Vagina (tissue), 2 donors: ENCODE measurements at regions of chr1 and their contacts with region 1.

Region 1: GRCh38 chr1:200669314-200670241 is at the start of gene DDX59:
- DNase-seq: peak in 1 of 2 donors; percentile 98
- H3K4me3 ChIP-seq: peak within 1 kb of the TSS; percentile 76 to 92
- H3K27ac ChIP-seq: peak within 1 kb of the TSS; percentile 98
- H3K4me1 ChIP-seq: peaks cover 34% of the 10 kb centered on the region
- H3K27me3 ChIP-seq: no peaks in the 10 kb centered on the region
- CTCF ChIP-seq: peak in 1 of 3 experiments; percentile 29
- POLR2A ChIP-seq: peak in 1 of 2 donors; percentile 80
- total RNA-seq, gene DDX59: 16.2 TPM

Region 2: DNA sequence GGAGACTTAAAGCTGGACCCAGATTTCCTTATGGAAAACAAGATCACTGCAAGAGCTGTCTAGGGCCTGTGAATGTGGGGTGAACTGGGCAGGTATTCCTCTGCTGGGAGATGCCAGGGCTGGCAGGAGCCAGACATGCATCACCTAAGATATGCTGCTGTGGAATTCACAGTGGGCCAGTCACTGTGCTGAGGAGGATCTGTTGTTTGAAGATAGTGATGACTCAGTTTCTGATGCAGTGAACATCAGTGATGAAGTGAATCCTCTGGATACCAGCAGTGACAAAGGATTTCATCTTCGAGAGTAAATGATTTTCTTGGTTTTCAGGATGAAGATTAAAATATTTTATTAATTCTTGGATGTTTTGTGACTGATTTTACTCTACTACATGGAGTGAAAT is 39.2 kb after region 1 on chr1:
- intact Hi-C with region 1: no loop called
- DNase-seq: no peak
- H3K4me3 ChIP-seq: no peak overlapping the region
- H3K27ac ChIP-seq: no peak overlapping the region
- H3K4me1 ChIP-seq: no peaks in the 10 kb centered on the region
- H3K27me3 ChIP-seq: no peaks in the 10 kb centered on the region
- CTCF ChIP-seq: no peak
- POLR2A ChIP-seq: no peak

Region 3: DNA sequence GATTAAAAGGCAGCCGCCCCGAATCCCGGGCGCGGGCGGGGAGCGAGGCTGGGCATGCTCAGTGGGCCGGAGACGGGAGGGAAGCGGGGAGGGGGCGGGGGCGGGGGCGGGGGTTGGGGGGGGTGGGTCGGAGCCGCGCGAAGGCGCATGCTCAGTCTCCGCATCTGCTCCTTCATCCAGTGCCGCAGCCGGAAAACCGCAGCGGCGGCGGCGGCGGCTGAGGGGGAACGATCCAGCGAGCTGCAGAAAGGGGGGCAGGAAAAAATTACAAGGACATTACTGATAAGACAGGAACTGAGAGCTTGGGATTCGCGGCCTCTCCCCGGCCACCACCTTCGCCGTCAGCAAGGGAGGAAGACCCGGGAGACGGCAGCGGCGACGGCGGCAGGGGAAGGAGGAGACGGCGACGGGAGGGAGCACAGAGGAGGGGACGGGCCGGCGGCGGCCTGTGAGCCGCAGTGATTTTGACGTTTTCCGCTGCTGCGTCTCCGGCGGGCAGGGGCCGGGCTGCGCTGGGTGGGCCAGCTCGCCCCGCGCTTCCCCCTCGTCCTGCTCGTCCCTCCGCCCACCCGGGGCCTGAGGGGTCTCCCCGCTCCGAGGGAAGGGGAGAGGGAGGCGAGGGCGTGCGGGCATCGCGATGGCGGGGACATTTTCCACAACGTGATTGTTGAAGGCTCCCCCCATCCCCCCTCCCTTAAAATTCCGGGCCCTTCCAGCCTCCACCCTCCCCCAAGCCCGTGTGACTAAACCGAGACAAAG is 69.3 kb after region 1 on chr1 and contains the start of gene CAMSAP2:
- intact Hi-C with region 1: loop called (anchors 2 kb)
- DNase-seq: peak in 1 of 2 donors; percentile 97
- H3K4me3 ChIP-seq: peak within 1 kb of the TSS; percentile 57 to 92
- H3K27ac ChIP-seq: peak within 1 kb of the TSS; percentile 98
- H3K4me1 ChIP-seq: peaks cover 41% of the 10 kb centered on the region
- H3K27me3 ChIP-seq: no peaks in the 10 kb centered on the region
- CTCF ChIP-seq: no peak
- POLR2A ChIP-seq: peak in 1 of 2 donors; percentile 96
- total RNA-seq, gene CAMSAP2: 30.0 TPM

Region 4: GRCh38 chr1:200787896-200788387 is 118.4 kb after region 1 on chr1:
- intact Hi-C with region 1: loop called (anchors 2 kb)
- DNase-seq: no peak
- H3K4me3 ChIP-seq: no peak overlapping the region
- H3K27ac ChIP-seq: no peak overlapping the region
- H3K4me1 ChIP-seq: no peaks in the 10 kb centered on the region
- H3K27me3 ChIP-seq: no peaks in the 10 kb centered on the region
- CTCF ChIP-seq: no peak
- POLR2A ChIP-seq: no peak